T-cell (primary cell): ENCODE measurements at regions of chr16 and their contacts with region 1.

Region 1: DNA sequence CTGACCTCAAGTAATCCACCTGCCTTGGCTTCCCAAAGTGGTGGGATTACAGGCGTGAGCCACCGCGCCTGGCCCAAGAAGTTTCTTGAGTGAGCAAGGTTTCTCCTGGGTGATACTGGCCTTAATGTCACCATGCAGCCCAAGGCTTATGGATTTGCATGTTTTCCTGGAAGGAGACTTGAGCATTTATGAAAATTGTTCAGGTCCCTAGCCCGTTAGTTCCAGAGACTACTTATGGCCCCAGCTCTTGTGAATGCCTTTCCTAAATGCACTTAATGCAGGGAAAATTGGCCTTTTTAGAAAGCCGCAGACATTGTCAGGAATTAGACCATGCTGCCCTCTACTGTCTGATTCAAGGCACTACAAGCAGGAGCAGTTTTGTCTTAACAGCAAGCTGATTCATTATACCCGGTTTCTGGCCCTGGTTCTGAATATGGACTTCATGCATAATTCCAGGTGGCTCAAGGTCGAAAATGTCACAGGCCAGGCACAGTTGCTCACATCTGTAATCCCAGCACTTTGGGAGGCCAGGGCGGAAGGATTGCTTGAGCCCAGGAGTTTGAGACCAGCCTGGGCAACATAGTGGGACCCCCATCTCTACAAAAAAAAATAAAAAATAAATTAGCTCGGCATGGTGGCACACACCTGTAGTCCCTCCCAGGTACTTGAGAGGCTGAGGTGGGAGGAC is 91.3 kb downstream of the SNX29 start:
- DNase-seq: peak in 26 of 35 experiments; percentile 14 to 83 (median 40)
- ATAC-seq: peak; percentile 76 to 80 (median 78)
- H3K4me3 ChIP-seq: no peak overlapping the region
- H3K4me3 Mint-ChIP-seq: no peak overlapping the region
- H3K27ac ChIP-seq: no peak overlapping the region
- H3K27ac Mint-ChIP-seq: peak overlapping the region in 1 of 2 donors; percentile 39
- H3K4me1 ChIP-seq: peaks cover 0 to 6% of the 10 kb centered on the region in 2 experiments
- H3K4me1 Mint-ChIP-seq: peaks cover 0 to 5% (median 4%) of the 10 kb centered on the region in 3 donors
- H3K27me3 ChIP-seq: no peaks in the 10 kb centered on the region
- H3K27me3 Mint-ChIP-seq: no peaks in the 10 kb centered on the region

Region 2: DNA sequence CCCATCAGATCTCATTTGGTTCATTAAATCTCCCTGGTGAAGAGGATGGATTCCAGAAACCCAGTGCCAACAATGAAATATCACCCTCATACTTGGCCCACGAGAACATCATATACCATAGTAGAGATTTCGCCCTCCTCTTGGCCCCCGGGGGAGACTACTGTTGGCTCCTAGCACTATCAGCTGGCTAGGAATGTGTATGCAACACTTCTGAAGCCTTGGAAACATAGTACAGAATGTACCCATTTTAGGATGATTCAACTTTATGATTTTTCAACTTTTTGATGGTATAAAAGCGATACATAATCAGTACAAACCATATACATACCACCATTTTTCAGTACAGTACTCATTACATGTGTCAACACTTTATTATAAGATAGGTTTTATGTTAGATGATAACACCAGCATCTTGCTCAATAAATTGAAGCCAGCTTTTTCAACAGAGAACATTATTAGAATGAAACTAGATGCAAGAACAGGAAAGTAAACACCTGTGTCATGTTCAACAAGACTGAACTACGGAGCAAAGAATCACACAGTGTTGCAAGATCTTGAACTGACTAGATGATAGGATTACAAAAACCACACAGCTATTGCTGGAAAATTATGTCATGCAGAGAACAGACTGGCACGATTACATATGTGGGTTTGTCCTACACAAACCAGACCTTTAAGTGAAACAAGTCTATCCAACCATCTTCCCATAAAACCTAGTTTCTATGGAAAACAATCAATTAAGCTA is 233.7 kb before region 1 on chr16:
- CTCF ChIA-PET with region 1: no interaction called
- POLR2A ChIA-PET with region 1: interaction called in 1 of 2 experiments, 12 read pairs
- DNase-seq: no peak
- ATAC-seq: no peak
- H3K4me3 ChIP-seq: no peak overlapping the region
- H3K4me3 Mint-ChIP-seq: no peak overlapping the region
- H3K27ac ChIP-seq: no peak overlapping the region
- H3K27ac Mint-ChIP-seq: no peak overlapping the region
- H3K4me1 ChIP-seq: no peaks in the 10 kb centered on the region
- H3K4me1 Mint-ChIP-seq: peaks cover 0 to 6% (median 0%) of the 10 kb centered on the region in 3 donors
- H3K27me3 ChIP-seq: no peaks in the 10 kb centered on the region
- H3K27me3 Mint-ChIP-seq: no peaks in the 10 kb centered on the region

Region 3: GRCh38 chr16:12079412-12079965 is 11.6 kb after region 1 on chr16:
- CTCF ChIA-PET with region 1: interaction called, 4 to 13 read pairs
- POLR2A ChIA-PET with region 1: no interaction called
- DNase-seq: peak in 1 of 35 experiments; percentile 52
- ATAC-seq: peak; percentile 23 to 35 (median 28)
- H3K4me3 ChIP-seq: peak overlapping the region in 1 of 2 donors; percentile 44
- H3K4me3 Mint-ChIP-seq: peak overlapping the region; percentile 59 to 70 (median 59)
- H3K27ac ChIP-seq: peak overlapping the region; percentile 86
- H3K27ac Mint-ChIP-seq: peak overlapping the region; percentile 93 to 97
- H3K4me1 ChIP-seq: peaks cover 49 to 78% of the 10 kb centered on the region in 2 experiments
- H3K4me1 Mint-ChIP-seq: peaks cover 83% of the 10 kb centered on the region in 3 donors
- H3K27me3 ChIP-seq: no peaks in the 10 kb centered on the region
- H3K27me3 Mint-ChIP-seq: no peaks in the 10 kb centered on the region